GM23248 (cell line): ENCODE measurements at regions of chr17 and their contacts with region 1.

Region 1: GRCh38 chr17:66165513-66166123 is 26.3 kb downstream of the CEP112 start:
- DNase-seq: peak; percentile 66
- H3K4me3 ChIP-seq: no peak overlapping the region
- H3K27ac ChIP-seq: no peak overlapping the region
- H3K4me1 ChIP-seq: no peaks in the 10 kb centered on the region
- H3K27me3 ChIP-seq: no peaks in the 10 kb centered on the region

Region 2: DNA sequence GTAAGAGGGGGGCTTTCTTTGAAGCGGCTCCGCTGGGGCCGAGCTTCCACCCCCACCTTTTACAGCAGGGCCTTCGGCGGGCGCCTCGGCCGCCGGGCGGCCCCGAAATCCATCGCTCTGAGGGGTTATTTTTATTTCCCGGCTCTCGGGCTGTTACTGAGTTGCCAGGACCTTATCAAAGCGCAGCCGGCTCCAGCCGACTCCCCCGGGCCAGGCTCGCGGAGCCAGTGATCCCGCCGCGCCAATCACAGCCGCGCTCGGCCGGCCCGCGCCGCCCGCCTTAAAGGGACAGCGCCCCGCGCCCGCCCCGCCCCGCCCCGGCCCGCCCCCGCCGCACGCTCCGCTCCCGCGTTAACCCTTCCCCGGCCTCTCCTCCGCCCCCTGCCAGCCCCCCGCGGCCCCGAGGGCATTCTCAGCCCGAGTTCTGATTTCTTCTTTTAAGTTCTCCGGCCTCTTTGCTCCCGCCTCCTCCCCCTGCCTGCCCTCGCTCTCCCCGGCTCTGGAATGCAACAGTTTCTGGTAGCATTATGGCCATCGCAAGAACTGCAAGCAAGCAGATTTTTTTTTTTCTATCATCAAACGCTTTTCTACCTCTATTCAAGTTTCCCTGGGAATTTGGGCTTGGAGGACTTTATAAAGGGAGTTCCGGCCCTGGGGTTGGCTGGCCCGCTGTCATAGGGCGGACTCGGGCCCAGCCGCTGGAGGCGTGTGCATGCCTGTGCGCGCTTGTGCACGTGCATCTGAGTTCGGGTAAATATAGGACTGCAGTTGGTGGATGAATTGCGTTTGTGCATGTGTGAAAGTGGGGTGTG is 604.0 kb before region 1 on chr17 and contains the start of gene AXIN2:
- in situ Hi-C with region 1: loop called (anchors 25 kb)
- DNase-seq: peak; percentile 96
- H3K4me3 ChIP-seq: peak within 1 kb of the TSS; percentile 75
- H3K27ac ChIP-seq: peak within 1 kb of the TSS; percentile 74
- H3K4me1 ChIP-seq: peaks cover 4% of the 10 kb centered on the region
- H3K27me3 ChIP-seq: no peaks in the 10 kb centered on the region
- total RNA-seq, gene AXIN2: 2.3 and 2.4 TPM in 2 replicates

Region 3: GRCh38 chr17:65990593-65990992 is 175.0 kb before region 1 on chr17:
- in situ Hi-C with region 1: no loop called
- DNase-seq: no peak
- H3K4me3 ChIP-seq: no peak overlapping the region
- H3K27ac ChIP-seq: no peak overlapping the region
- H3K4me1 ChIP-seq: no peaks in the 10 kb centered on the region
- H3K27me3 ChIP-seq: no peaks in the 10 kb centered on the region

Region 4: GRCh38 chr17:66474258-66474657 is 308.6 kb after region 1 on chr17:
- in situ Hi-C with region 1: no loop called
- DNase-seq: no peak
- H3K4me3 ChIP-seq: no peak overlapping the region
- H3K27ac ChIP-seq: no peak overlapping the region
- H3K4me1 ChIP-seq: peaks cover 13% of the 10 kb centered on the region
- H3K27me3 ChIP-seq: no peaks in the 10 kb centered on the region